ENCODE measurements at regions of chr17 and their contacts with region 1.

Region 1: DNA sequence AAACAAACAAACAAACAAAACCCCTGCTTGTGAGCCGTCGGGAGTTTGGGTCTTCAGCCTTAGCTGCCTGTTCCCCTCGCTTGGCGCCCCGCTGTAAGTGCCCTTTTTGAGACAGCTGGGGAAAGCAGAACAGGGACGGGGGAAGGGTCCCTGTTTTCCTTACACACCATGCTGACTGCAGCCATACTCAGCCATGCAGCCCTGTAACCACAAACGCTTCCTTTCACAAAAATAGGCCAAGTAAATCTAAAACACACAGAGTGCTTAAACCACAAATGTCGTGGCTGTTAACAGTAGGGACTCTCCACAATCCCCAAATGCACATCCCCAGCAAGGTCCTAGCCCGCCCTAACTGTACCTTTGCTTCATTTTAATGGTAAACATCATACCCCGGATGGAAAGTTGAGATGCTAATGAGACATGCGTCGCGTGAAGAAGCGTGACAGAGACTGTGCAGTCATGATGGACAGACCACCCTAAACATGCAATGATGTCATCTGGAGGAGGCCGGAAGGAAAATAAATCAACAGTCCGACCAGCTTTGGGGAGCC is 129.9 kb downstream of the MGAT5B start:
- DNase-seq: peak; percentile 33 to 92 (median 45)
- ATAC-seq: peak; percentile 91
- H3K4me3 ChIP-seq: peak overlapping the region; percentile 24
- H3K4me3 Mint-ChIP-seq: peak overlapping the region; percentile 42
- H3K27ac ChIP-seq: peak overlapping the region; percentile 73 to 90
- H3K27ac Mint-ChIP-seq: peak overlapping the region; percentile 86
- H3K4me1 ChIP-seq: peaks cover 70% of the 10 kb centered on the region
- H3K4me1 Mint-ChIP-seq: peaks cover 59% of the 10 kb centered on the region
- H3K27me3 ChIP-seq: no peaks in the 10 kb centered on the region
- H3K27me3 Mint-ChIP-seq: no peaks in the 10 kb centered on the region
- CTCF ChIP-seq: no peak

Region 2: DNA sequence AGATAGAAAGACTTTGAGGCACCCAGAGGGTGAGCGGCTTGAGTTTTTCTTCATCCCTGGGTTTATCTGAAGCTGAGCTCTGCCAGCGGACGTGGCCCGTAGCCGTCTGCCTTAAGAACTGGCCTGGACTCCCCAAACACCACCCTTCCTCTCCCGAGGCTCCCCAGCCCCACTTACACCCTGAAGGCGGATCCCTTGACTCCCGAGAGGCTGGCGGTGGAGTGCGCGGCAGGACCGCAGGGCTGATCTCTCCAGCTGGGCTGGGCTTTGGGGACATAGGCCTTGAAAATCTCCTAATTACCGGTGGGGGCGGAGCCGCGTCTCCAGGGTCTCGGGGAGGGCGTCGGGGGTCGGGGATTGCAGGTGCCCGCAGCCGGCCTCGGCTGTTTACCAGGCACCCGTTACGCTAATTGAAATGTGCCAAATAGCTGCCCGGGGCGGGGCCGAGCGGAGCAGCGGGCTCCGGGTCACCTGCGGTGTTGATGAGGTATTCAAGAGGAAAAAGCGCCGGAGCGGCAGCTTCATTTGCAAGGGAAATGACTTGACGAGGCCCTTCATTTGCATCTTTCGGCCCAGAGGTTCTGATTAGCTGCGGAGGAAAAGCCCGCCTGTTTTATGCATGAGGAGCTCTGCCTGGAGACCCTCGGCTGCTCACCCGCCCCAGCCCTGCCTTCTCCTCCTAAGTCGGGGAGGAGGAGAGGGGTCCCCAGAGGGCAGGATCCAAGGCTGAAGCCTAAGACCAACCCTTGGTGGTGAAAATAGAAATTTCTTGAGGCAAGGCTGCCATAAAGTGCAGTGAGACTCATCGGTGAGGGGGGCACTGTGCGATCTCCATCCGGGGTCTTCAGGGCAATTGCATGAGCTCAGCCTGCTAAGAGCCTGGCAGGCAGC is 29.1 kb before region 1 on chr17:
- CTCF ChIA-PET with region 1: no interaction called
- POLR2A ChIA-PET with region 1: interaction called, 19 read pairs
- intact Hi-C with region 1: loop called in 1 of 2 experiments (anchors 1 kb)
- DNase-seq: peak; percentile 20 to 76 (median 46)
- ATAC-seq: peak; percentile 78
- H3K4me3 ChIP-seq: peak overlapping the region; percentile 54
- H3K4me3 Mint-ChIP-seq: peak overlapping the region; percentile 82
- H3K27ac ChIP-seq: no peak overlapping the region
- H3K27ac Mint-ChIP-seq: peak overlapping the region; percentile 74
- H3K4me1 ChIP-seq: peaks cover 25% of the 10 kb centered on the region
- H3K4me1 Mint-ChIP-seq: peaks cover 28% of the 10 kb centered on the region
- H3K27me3 ChIP-seq: no peaks in the 10 kb centered on the region
- H3K27me3 Mint-ChIP-seq: peaks cover 4% of the 10 kb centered on the region
- CTCF ChIP-seq: no peak

Region 3: DNA sequence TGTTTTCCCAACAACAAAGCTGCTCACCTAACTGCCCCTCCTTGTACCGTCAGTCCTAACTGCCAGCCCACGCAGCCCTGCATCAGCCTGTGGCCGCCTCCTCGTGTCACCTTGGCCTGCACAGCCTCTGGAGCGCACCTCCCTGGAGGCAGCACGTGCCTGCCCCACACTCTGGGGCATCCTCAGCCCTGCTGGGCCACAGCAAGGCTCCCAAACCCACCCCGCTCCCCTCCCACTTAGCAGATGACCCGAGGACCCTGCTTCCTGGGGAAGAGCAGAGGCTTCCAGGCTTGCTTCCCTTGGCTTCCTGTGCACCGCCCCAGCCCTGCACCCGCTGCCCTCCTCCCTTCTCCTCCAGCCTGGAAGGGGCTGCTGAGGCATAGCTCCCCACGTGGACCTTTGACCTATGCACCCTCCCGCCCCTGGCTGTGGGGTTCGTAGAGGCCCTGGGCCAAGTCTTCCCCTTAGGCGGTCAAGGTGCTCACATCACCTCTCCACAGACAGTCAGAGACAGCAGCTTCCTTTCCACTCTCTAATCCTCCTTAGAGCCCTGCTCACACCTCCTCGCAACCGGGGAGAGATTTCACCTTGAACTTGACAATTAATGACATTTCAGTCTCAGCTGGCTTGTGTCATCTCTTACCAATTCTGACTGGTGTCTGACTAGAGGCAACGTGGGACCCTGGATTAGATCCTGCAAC is 14.8 kb before region 1 on chr17:
- CTCF ChIA-PET with region 1: no interaction called
- POLR2A ChIA-PET with region 1: interaction called, 25 read pairs
- intact Hi-C with region 1: loop called in 1 of 2 experiments (anchors 2 kb)
- DNase-seq: peak in 2 of 14 experiments; percentile 20 to 22
- ATAC-seq: peak; percentile 45
- H3K4me3 ChIP-seq: no peak overlapping the region
- H3K4me3 Mint-ChIP-seq: peak overlapping the region; percentile 70
- H3K27ac ChIP-seq: peak overlapping the region in 1 of 2 donors; percentile 60
- H3K27ac Mint-ChIP-seq: peak overlapping the region; percentile 85
- H3K4me1 ChIP-seq: peaks cover 28% of the 10 kb centered on the region
- H3K4me1 Mint-ChIP-seq: peaks cover 24% of the 10 kb centered on the region
- H3K27me3 ChIP-seq: no peaks in the 10 kb centered on the region
- H3K27me3 Mint-ChIP-seq: no peaks in the 10 kb centered on the region
- CTCF ChIP-seq: no peak

Region 4: DNA sequence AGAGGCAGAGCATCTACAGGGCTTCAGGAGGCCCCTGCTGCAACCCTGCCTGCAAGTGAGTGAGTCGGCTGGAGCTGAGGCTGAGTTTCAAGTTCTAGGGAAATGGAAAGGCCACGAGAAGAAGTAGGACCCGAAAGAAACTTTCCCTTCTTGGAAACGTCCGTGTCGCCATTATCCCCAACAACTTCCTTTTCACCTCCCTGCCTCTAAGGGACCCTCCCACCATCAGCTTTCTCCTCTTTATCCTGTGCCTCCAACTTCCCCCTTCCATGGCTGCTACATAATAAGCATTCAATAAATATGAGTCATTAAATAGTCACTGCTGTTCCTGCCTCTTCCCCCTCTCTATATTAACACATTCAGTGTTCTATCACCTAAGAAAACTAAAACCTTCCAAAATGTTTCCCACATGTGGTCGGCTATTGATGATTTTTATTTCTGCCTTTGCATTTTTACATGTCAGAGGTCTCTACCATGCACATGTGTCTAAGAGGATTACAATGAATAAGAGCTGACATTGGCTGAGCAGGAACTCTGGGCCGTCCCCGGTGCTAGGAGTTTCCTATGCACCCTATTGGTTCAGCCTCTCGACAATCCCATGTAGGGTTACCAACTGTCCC is 844.6 kb after region 1 on chr17:
- CTCF ChIA-PET with region 1: no interaction called
- POLR2A ChIA-PET with region 1: no interaction called
- intact Hi-C with region 1: loop called in 1 of 2 experiments (anchors 5 kb)
- DNase-seq: peak in 3 of 14 experiments; percentile 25 to 66 (median 54)
- ATAC-seq: no peak
- H3K4me3 ChIP-seq: no peak overlapping the region
- H3K4me3 Mint-ChIP-seq: no peak overlapping the region
- H3K27ac ChIP-seq: no peak overlapping the region
- H3K27ac Mint-ChIP-seq: peak overlapping the region; percentile 92
- H3K4me1 ChIP-seq: peaks cover 61% of the 10 kb centered on the region
- H3K4me1 Mint-ChIP-seq: peaks cover 54% of the 10 kb centered on the region
- H3K27me3 ChIP-seq: no peaks in the 10 kb centered on the region
- H3K27me3 Mint-ChIP-seq: no peaks in the 10 kb centered on the region
- CTCF ChIP-seq: no peak

Measured in CD4-positive, alpha-beta T cell (primary cell).